ENCODE measurements at regions of chr6 and their contacts with region 1.

Region 1: DNA sequence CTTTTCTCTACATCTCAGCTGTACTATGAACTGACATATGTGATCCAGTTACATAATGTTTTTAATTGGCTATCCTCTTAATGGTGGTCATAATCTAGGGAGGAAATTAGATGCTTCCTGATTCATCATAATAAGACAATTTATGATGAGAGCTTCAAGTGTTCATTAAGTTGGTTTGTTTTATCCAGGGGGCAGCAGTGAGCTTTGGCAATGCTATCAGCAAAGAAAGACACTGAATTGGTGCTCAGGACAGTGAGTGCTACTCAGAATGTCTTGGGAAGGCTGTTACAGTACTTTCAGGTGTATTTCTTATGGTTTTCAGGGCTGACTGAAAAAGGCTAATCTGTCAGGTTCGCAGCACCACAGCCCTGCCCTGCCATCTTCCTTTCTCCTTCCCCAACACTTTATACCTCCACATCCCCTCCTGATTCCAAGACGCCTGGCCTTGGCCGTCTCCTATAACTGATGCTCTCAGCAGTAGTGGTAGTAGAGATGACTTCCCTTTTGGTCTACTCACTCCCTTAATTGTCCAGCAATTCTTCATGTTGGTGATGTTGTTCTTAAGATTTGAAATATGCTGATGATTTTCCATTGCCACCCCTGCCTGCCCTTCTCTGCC is 67.0 kb upstream of the TNFAIP3 start:
- DNase-seq: peak; percentile 76
- ATAC-seq: peak; percentile 80
- H3K4me3 Mint-ChIP-seq: no peak overlapping the region
- H3K27ac Mint-ChIP-seq: peak overlapping the region; percentile 84
- H3K4me1 Mint-ChIP-seq: peaks cover 65% of the 10 kb centered on the region
- H3K27me3 Mint-ChIP-seq: no peaks in the 10 kb centered on the region

Region 2: DNA sequence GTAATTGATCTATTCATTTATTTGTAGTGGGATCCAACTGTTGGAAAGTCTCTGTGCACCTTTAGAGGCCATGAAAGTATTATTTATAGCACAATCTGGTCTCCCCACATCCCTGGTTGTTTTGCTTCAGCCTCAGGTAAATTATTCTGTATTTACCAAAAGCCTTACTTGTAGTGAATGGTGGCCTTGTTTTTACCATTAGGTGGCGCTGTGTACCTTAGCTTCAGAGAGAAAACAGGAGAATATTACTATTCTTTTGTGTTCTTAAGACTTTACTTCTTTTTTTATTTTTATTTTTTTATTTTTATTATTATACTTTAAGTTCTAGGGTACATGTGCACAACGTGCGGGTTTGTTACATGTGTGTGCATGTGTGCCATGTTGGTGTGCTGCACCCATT is 954.0 kb before region 1 on chr6:
- CTCF ChIA-PET with region 1: no interaction called
- POLR2A ChIA-PET with region 1: no interaction called
- intact Hi-C with region 1: no loop called
- DNase-seq: peak; percentile 52
- ATAC-seq: peak; percentile 39
- H3K4me3 Mint-ChIP-seq: no peak overlapping the region
- H3K27ac Mint-ChIP-seq: no peak overlapping the region
- H3K4me1 Mint-ChIP-seq: no peaks in the 10 kb centered on the region
- H3K27me3 Mint-ChIP-seq: no peaks in the 10 kb centered on the region

Region 3: GRCh38 chr6:137717074-137718073 is 82.7 kb before region 1 on chr6:
- CTCF ChIA-PET with region 1: interaction called, 13 read pairs
- POLR2A ChIA-PET with region 1: no interaction called
- intact Hi-C with region 1: no loop called
- DNase-seq: peak; percentile 88
- ATAC-seq: peak; percentile 82
- H3K4me3 Mint-ChIP-seq: peak overlapping the region; percentile 0
- H3K27ac Mint-ChIP-seq: peak overlapping the region; percentile 73
- H3K4me1 Mint-ChIP-seq: peaks cover 45% of the 10 kb centered on the region
- H3K27me3 Mint-ChIP-seq: no peaks in the 10 kb centered on the region

Region 4: DNA sequence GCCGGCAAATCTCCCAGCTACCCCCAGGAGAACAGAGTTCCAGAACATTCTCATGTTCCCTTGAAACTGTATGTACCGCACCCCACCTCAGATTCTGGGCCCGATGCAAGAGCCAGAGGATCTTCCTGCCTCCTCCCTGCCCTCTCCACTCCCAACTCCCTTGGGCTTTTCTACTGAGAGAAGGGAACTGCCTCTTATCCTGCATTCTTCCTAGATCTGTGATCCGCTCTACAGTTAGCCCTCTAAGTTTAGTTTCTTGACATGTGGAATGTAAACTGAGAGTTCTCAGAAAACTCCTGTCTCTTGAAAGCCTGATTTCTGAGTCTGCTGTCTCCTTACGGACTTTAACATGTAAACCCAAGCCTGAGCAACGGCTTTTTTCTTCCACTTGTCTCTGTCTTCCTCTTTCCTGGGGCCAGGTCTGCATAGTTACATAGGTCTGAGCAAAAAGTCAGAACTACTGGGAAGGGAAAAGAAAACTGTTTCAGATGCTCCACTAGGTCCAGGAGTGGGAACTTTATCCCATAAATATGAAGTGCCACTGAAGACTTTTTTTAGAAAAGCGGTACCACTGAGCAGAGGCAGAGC is 19.5 kb before region 1 on chr6:
- CTCF ChIA-PET with region 1: interaction called, 11 read pairs
- POLR2A ChIA-PET with region 1: no interaction called
- intact Hi-C with region 1: no loop called
- DNase-seq: no peak
- ATAC-seq: no peak
- H3K4me3 Mint-ChIP-seq: no peak overlapping the region
- H3K27ac Mint-ChIP-seq: no peak overlapping the region
- H3K4me1 Mint-ChIP-seq: no peaks in the 10 kb centered on the region
- H3K27me3 Mint-ChIP-seq: no peaks in the 10 kb centered on the region

Region 5: DNA sequence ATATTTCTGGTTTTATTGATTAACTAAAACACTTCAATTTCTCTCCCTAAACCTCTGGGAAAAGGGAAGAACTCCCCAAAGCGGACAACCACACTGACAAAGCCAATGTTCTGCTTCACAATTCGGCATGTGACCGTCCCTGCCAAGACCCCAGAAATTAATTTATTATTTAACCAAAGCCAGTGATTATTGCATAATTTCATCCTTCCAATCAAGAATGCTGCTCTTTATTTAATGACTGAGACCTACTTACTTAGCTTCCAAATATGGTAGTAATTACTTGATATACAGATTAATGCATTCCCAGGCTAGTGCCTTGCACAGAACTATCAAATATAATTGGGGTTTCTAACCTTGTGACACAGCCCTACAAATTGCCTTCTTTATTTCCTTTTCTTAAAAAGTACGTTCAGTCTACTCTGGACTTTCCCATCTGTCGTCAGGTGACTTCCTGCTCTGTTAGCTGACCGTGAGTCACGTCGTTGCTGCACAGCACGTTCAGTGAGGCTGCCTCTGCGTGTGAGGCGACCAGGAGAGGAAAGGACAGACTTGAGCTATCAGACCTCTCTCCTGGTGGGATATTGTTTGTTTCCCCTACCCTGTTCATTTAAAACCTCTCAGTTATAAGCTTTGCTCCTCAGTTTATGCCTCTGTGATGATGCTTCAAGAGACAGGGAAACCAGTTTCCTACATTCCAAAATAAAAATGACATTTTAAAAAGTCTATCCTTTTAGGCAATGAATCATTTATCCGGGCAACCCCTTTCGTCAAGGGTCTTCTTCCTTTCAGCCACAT is 11.3 kb after region 1 on chr6:
- CTCF ChIA-PET with region 1: interaction called, 69 read pairs
- POLR2A ChIA-PET with region 1: no interaction called
- intact Hi-C with region 1: loop called in 1 of 2 experiments (anchors 1 kb)
- DNase-seq: peak; percentile 91
- ATAC-seq: peak; percentile 93
- H3K4me3 Mint-ChIP-seq: peak overlapping the region; percentile 55
- H3K27ac Mint-ChIP-seq: peak overlapping the region; percentile 83
- H3K4me1 Mint-ChIP-seq: peaks cover 79% of the 10 kb centered on the region
- H3K27me3 Mint-ChIP-seq: no peaks in the 10 kb centered on the region

Region 6: GRCh38 chr6:137958811-137959565 is 158.9 kb after region 1 on chr6:
- CTCF ChIA-PET with region 1: no interaction called
- POLR2A ChIA-PET with region 1: no interaction called
- intact Hi-C with region 1: no loop called
- DNase-seq: no peak
- ATAC-seq: no peak
- H3K4me3 Mint-ChIP-seq: no peak overlapping the region
- H3K27ac Mint-ChIP-seq: no peak overlapping the region
- H3K4me1 Mint-ChIP-seq: peaks cover 4% of the 10 kb centered on the region
- H3K27me3 Mint-ChIP-seq: no peaks in the 10 kb centered on the region

Region 7: GRCh38 chr6:137989664-137990063 is 189.6 kb after region 1 on chr6:
- CTCF ChIA-PET with region 1: no interaction called
- POLR2A ChIA-PET with region 1: no interaction called
- intact Hi-C with region 1: no loop called
- DNase-seq: no peak
- ATAC-seq: no peak
- H3K4me3 Mint-ChIP-seq: no peak overlapping the region
- H3K27ac Mint-ChIP-seq: no peak overlapping the region
- H3K4me1 Mint-ChIP-seq: no peaks in the 10 kb centered on the region
- H3K27me3 Mint-ChIP-seq: peaks cover 4% of the 10 kb centered on the region

Measured in activated CD4-positive, alpha-beta T cell treated with anti-CD3 and anti-CD28 coated beads for 36 hours (primary cell).